T-cell (primary cell): ENCODE measurements at regions of chr10 and their contacts with region 1.

Region 1: DNA sequence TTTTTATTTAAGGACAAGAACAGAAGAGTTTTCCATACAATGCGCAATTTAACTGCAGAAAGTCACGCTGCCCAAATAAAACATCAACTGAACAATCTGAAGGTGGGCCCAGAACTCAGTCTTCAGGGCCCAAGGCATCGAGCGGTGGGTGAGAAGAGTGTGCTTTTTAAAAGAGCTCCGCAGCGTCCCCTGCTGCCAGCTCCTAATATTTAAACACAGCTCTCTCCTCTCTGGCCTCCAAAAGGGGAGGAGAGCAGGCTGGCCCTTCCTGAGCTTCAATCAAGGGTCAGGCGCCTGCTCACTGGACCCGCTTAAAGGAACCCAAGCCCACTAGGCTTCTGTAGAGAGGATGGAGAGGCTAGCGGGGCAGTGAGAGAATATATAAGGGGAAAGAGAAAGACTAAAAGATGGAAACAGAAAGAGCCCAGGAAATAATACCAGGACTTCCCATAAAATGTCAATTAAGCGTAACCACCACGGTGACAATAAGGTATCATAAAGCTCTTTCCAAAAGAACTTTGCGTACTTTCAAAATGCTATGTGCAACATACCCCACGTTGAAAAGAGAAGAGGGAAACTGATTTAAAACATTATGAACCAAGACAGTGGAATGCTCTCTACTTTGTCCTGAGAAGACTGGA is 2.8 kb downstream of the FAM53B start:
- DNase-seq: peak; percentile 53 to 88 (median 74)
- ATAC-seq: peak; percentile 52 to 62 (median 54)
- H3K4me3 ChIP-seq: peak overlapping the region; percentile 26 to 79
- H3K4me3 Mint-ChIP-seq: peak overlapping the region; percentile 89 to 99 (median 95)
- H3K27ac ChIP-seq: peak overlapping the region; percentile 83
- H3K27ac Mint-ChIP-seq: peak overlapping the region; percentile 90 to 96
- H3K4me1 ChIP-seq: peaks cover 54 to 68% of the 10 kb centered on the region in 2 experiments
- H3K4me1 Mint-ChIP-seq: peaks cover 73 to 74% (median 74%) of the 10 kb centered on the region in 3 donors
- H3K27me3 ChIP-seq: no peaks in the 10 kb centered on the region
- H3K27me3 Mint-ChIP-seq: no peaks in the 10 kb centered on the region

Region 2: DNA sequence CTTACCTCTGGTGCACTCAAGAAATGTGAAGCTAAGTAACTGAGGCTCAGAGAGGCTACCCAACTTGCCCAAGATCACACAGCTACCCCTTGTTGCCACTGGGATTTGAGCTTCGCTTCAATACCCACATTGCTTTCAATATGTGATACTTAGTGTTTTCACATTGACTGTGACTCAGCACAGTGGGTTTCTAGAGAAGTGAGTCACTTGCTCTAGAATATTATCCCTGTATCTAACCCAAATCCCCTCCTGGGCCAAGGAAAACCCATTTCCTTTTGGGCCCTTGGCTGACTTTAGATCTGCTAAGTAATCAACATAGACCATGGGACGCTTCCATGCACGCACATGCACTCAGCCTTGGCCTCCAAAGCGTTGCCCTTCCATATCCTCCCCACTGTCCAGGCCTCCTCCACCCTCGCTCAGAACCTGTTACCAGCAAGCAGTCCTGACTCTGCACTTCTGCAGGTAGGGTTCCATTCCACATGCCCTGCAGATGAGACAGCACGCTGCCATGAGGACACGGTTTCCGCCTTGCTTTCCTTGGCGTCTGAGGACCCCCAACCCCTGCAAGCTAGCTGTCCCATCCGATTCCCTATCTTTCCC is 560.4 kb before region 1 on chr10:
- CTCF ChIA-PET with region 1: no interaction called
- POLR2A ChIA-PET with region 1: no interaction called
- DNase-seq: no peak
- ATAC-seq: no peak
- H3K4me3 ChIP-seq: no peak overlapping the region
- H3K4me3 Mint-ChIP-seq: no peak overlapping the region
- H3K27ac ChIP-seq: no peak overlapping the region
- H3K27ac Mint-ChIP-seq: no peak overlapping the region
- H3K4me1 ChIP-seq: peaks cover 0 to 4% of the 10 kb centered on the region in 2 experiments
- H3K4me1 Mint-ChIP-seq: peaks cover 0 to 6% (median under 1%) of the 10 kb centered on the region in 3 donors
- H3K27me3 ChIP-seq: peaks cover 0 to 15% of the 10 kb centered on the region in 2 experiments
- H3K27me3 Mint-ChIP-seq: peaks cover under 1 to 1% of the 10 kb centered on the region in 2 donors

Region 3: DNA sequence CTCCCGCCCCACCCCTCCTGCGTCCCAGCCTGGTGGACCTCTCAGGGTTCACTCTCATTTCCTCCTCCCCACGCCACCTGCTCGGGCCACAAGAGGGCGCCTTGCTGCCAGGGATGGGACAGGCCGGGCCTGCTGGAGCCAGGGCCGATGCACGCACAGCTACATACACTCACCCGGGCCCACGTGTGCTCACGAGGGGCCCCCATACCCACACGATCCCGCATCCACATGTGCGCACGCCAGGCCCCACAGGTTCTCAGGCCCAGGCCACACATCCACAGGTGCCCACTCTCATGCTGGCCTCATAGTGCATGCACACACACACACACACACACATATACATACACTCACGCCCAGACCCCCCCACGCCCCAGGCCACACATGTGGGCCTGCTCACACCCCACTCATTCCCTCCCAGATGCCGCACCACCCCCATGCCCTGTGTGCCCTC is 211.2 kb before region 1 on chr10:
- CTCF ChIA-PET with region 1: interaction called, 22 to 87 read pairs
- POLR2A ChIA-PET with region 1: no interaction called
- DNase-seq: peak; percentile 69 to 89 (median 82)
- ATAC-seq: peak; percentile 92 to 98 (median 96)
- H3K4me3 ChIP-seq: no peak overlapping the region
- H3K4me3 Mint-ChIP-seq: no peak overlapping the region
- H3K27ac ChIP-seq: no peak overlapping the region
- H3K27ac Mint-ChIP-seq: peak overlapping the region in 1 of 2 donors; percentile 59
- H3K4me1 ChIP-seq: peaks cover 0 to 16% of the 10 kb centered on the region in 2 experiments
- H3K4me1 Mint-ChIP-seq: peaks cover 4 to 13% (median 7%) of the 10 kb centered on the region in 3 donors
- H3K27me3 ChIP-seq: peaks cover 0 to 5% of the 10 kb centered on the region in 2 experiments
- H3K27me3 Mint-ChIP-seq: no peaks in the 10 kb centered on the region

Region 4: DNA sequence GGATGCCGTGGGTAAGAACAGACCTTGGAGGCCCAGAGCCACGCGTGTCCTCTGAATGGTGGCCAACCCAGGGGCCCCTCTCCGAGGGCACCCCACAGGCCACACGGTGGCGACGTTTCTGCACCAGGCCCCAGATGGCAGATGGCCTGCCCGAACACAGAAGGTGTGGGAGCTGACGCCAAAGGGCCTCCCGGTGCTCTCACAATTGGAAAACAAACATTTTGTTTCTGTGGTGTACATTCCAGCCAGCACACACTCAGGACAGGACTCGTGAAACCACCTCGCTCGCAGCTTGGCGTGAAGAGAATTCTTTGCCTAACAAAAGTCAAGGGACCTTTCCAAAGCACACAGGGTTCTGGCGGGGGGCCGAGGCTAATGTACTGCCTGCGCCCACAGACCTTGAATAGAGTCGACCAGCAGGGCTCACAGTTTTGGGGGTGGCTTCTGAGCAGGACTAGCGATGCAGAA is 109.3 kb before region 1 on chr10:
- CTCF ChIA-PET with region 1: interaction called, 4 to 15 read pairs
- POLR2A ChIA-PET with region 1: no interaction called
- DNase-seq: peak in 19 of 35 experiments; percentile 24 to 65 (median 44)
- ATAC-seq: peak in 1 of 4 experiments; percentile 30
- H3K4me3 ChIP-seq: no peak overlapping the region
- H3K4me3 Mint-ChIP-seq: peak overlapping the region in 1 of 3 donors; percentile 49
- H3K27ac ChIP-seq: peak overlapping the region; percentile 6
- H3K27ac Mint-ChIP-seq: peak overlapping the region; percentile 78 to 82
- H3K4me1 ChIP-seq: peaks cover 27 to 77% of the 10 kb centered on the region in 2 experiments
- H3K4me1 Mint-ChIP-seq: peaks cover 62 to 88% (median 69%) of the 10 kb centered on the region in 3 donors
- H3K27me3 ChIP-seq: no peaks in the 10 kb centered on the region
- H3K27me3 Mint-ChIP-seq: no peaks in the 10 kb centered on the region

Region 5: GRCh38 chr10:124677749-124678556 is 63.4 kb before region 1 on chr10:
- CTCF ChIA-PET with region 1: interaction called, 5 to 26 read pairs
- POLR2A ChIA-PET with region 1: no interaction called
- DNase-seq: peak in 1 of 35 experiments; percentile 23
- ATAC-seq: peak in 3 of 4 experiments; percentile 12 to 28 (median 14)
- H3K4me3 ChIP-seq: peak overlapping the region; percentile 3 to 32
- H3K4me3 Mint-ChIP-seq: peak overlapping the region; percentile 61 to 88 (median 66)
- H3K27ac ChIP-seq: peak overlapping the region; percentile 67
- H3K27ac Mint-ChIP-seq: peak overlapping the region; percentile 96 to 97
- H3K4me1 ChIP-seq: peaks cover 62 to 97% of the 10 kb centered on the region in 2 experiments
- H3K4me1 Mint-ChIP-seq: peaks cover 81 to 92% (median 87%) of the 10 kb centered on the region in 3 donors
- H3K27me3 ChIP-seq: no peaks in the 10 kb centered on the region
- H3K27me3 Mint-ChIP-seq: no peaks in the 10 kb centered on the region

Region 6: DNA sequence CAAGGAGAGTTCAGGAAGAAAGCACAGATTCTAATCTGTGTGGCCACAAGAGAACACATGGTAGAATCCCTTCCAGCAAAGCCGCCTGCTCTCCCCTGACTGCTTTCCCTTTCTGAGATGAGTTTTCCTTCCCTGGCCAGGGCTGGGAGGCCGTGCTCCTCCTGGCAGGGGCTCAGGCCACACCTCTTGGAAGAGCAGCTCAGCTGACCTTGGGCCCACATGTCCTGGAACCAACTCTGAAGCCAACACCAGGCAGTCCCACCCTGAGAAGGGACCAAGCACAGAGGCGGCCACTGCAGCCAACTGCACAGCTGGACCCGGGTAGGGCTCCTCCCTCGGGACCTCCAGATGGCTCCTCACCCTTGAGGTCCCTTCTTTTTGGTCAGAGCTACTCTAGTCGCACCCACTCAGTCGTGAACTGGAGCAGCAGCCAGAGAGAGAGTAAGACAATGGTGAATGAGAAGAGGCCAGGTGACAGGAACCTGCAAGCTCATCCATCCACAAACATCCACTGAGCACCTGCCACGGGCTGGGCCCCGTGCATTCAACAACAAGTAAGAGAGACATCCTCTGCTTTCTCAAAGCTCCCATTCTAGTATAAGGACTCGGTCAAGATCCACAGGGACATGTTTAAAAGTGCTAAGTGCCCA is 37.5 kb before region 1 on chr10:
- CTCF ChIA-PET with region 1: interaction called, 3 to 17 read pairs
- POLR2A ChIA-PET with region 1: interaction called in 1 of 2 experiments, 4 read pairs
- DNase-seq: no peak
- ATAC-seq: peak in 1 of 4 experiments; percentile 23
- H3K4me3 ChIP-seq: no peak overlapping the region
- H3K4me3 Mint-ChIP-seq: peak overlapping the region in 1 of 3 donors; percentile 72
- H3K27ac ChIP-seq: peak overlapping the region; percentile 93
- H3K27ac Mint-ChIP-seq: peak overlapping the region; percentile 99 to 100
- H3K4me1 ChIP-seq: peaks cover 42 to 98% of the 10 kb centered on the region in 2 experiments
- H3K4me1 Mint-ChIP-seq: peaks cover 95 to 100% (median 98%) of the 10 kb centered on the region in 3 donors
- H3K27me3 ChIP-seq: no peaks in the 10 kb centered on the region
- H3K27me3 Mint-ChIP-seq: no peaks in the 10 kb centered on the region

Region 7: GRCh38 chr10:124763267-124763666 is 21.9 kb after region 1 on chr10:
- CTCF ChIA-PET with region 1: no interaction called
- POLR2A ChIA-PET with region 1: interaction called in 1 of 2 experiments, 11 read pairs
- DNase-seq: no peak
- ATAC-seq: no peak
- H3K4me3 ChIP-seq: no peak overlapping the region
- H3K4me3 Mint-ChIP-seq: no peak overlapping the region
- H3K27ac ChIP-seq: no peak overlapping the region
- H3K27ac Mint-ChIP-seq: no peak overlapping the region
- H3K4me1 ChIP-seq: no peaks in the 10 kb centered on the region
- H3K4me1 Mint-ChIP-seq: peaks cover 2 to 5% (median 4%) of the 10 kb centered on the region in 3 donors
- H3K27me3 ChIP-seq: no peaks in the 10 kb centered on the region
- H3K27me3 Mint-ChIP-seq: no peaks in the 10 kb centered on the region